Naive thymus-derived CD4-positive, alpha-beta T cell (primary cell): ENCODE measurements at regions of chr4 and their contacts with region 1.

Region 1: GRCh38 chr4:140049024-140049848 is 104.7 kb downstream of the MAML3 start:
- DNase-seq: peak in 8 of 9 donors; percentile 13 to 73 (median 61)
- ATAC-seq: peak; percentile 92
- H3K4me3 ChIP-seq: peak overlapping the region; percentile 45
- H3K4me3 Mint-ChIP-seq: peak overlapping the region; percentile 76 to 93 (median 86)
- H3K27ac ChIP-seq: peak overlapping the region; percentile 46
- H3K27ac Mint-ChIP-seq: peak overlapping the region; percentile 77 to 94 (median 82)
- H3K4me1 ChIP-seq: peaks cover 3 to 14% of the 10 kb centered on the region in 2 donors
- H3K4me1 Mint-ChIP-seq: peaks cover 7 to 60% (median 41%) of the 10 kb centered on the region in 7 donors
- H3K27me3 ChIP-seq: no peaks in the 10 kb centered on the region
- H3K27me3 Mint-ChIP-seq: peaks cover 0 to 64% (median 0%) of the 10 kb centered on the region in 5 donors

Region 2: GRCh38 chr4:139734875-139735380 is 314.3 kb before region 1 on chr4:
- CTCF ChIA-PET with region 1: no interaction called
- POLR2A ChIA-PET with region 1: interaction called, 3 read pairs
- intact Hi-C with region 1: loop called in 1 of 2 experiments (anchors 2 kb)
- DNase-seq: peak; percentile 12 to 67 (median 45)
- ATAC-seq: peak; percentile 87
- H3K4me3 ChIP-seq: peak overlapping the region; percentile 44
- H3K4me3 Mint-ChIP-seq: peak overlapping the region; percentile 70 to 89 (median 78)
- H3K27ac ChIP-seq: no peak overlapping the region
- H3K27ac Mint-ChIP-seq: peak overlapping the region in 1 of 9 donors; percentile 29
- H3K4me1 ChIP-seq: peaks cover 0 to 5% of the 10 kb centered on the region in 2 donors
- H3K4me1 Mint-ChIP-seq: peaks cover 6 to 17% (median 13%) of the 10 kb centered on the region in 7 donors
- H3K27me3 ChIP-seq: no peaks in the 10 kb centered on the region
- H3K27me3 Mint-ChIP-seq: peaks cover 30 to 58% (median 39%) of the 10 kb centered on the region in 5 donors

Region 3: DNA sequence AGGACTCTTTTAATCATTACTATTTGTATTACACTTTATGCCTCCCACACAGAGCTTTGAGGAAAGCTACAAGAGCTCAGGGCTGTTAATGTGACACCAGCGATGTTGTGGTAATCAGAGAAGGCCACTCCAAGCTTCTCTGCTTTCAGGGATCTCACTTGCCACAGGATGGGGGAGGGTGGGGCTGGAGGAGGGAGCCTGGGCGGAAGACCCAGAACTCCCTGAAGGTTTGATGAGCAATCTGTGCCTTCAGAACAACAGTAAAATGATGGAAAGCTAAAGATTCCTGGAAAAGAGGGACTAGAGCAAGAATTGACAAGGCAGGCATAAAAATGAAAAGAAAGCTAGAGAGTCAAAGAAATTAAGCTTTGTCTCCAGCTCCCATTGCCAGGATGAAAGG is 29.1 kb after region 1 on chr4:
- CTCF ChIA-PET with region 1: no interaction called
- POLR2A ChIA-PET with region 1: no interaction called
- intact Hi-C with region 1: loop called in 1 of 2 experiments (anchors 5 kb)
- DNase-seq: no peak
- ATAC-seq: no peak
- H3K4me3 ChIP-seq: no peak overlapping the region
- H3K4me3 Mint-ChIP-seq: no peak overlapping the region
- H3K27ac ChIP-seq: no peak overlapping the region
- H3K27ac Mint-ChIP-seq: peak overlapping the region in 2 of 9 donors; percentile 2 to 5
- H3K4me1 ChIP-seq: peaks cover 0 to 6% of the 10 kb centered on the region in 2 donors
- H3K4me1 Mint-ChIP-seq: peaks cover 7 to 44% (median 25%) of the 10 kb centered on the region in 7 donors
- H3K27me3 ChIP-seq: no peaks in the 10 kb centered on the region
- H3K27me3 Mint-ChIP-seq: peaks cover 0 to 40% (median 0%) of the 10 kb centered on the region in 5 donors

Region 4: DNA sequence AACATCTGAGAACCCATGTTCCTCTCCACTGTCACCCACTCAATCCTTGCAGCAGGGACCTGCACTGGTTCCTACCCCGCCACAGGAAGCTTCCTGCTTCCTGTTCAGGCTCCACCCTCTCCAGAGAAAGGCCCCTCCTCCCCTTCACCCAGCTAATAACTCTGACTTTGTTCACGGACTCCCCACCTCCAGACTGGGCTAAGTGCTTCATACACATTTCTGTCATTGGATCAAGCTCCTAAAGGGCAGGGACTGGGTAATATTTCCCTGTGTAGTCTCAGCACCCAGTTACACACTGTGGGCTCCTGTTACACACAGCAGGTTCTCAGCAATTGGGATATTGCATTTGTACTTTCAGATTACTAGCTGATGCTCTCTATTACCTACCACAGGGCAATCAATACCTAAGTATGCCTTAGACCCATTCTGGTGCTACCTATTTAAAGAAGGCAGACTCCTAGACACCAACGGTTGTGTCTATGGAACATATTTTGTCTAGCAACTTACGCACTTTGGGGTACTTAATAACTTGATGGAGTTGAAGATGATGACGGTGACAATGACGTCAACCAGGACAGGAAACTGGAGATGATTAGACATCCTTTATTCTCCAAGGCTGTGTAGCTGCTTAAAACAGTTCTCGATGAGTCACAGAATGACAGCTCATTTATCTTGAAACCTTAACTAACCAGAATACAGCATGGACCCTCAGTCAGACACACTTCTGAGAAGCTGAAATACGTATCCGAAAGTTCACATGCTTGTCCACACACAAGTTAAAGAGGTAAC is 46.7 kb after region 1 on chr4:
- CTCF ChIA-PET with region 1: interaction called, 3 read pairs
- POLR2A ChIA-PET with region 1: interaction called, 4 read pairs
- intact Hi-C with region 1: loop called (anchors 1 kb)
- DNase-seq: peak in 8 of 9 donors; percentile 46 to 92 (median 71)
- ATAC-seq: peak; percentile 73
- H3K4me3 ChIP-seq: peak overlapping the region; percentile 39
- H3K4me3 Mint-ChIP-seq: peak overlapping the region; percentile 68 to 97 (median 88)
- H3K27ac ChIP-seq: peak overlapping the region; percentile 73
- H3K27ac Mint-ChIP-seq: peak overlapping the region; percentile 90 to 99 (median 95)
- H3K4me1 ChIP-seq: peaks cover 5 to 53% of the 10 kb centered on the region in 2 donors
- H3K4me1 Mint-ChIP-seq: peaks cover 51 to 83% (median 75%) of the 10 kb centered on the region in 7 donors
- H3K27me3 ChIP-seq: no peaks in the 10 kb centered on the region
- H3K27me3 Mint-ChIP-seq: peaks cover 0 to 2% (median 0%) of the 10 kb centered on the region in 5 donors